GM12878 (cell line): ENCODE measurements at regions of chr1 and their contacts with region 1.

Region 1: DNA sequence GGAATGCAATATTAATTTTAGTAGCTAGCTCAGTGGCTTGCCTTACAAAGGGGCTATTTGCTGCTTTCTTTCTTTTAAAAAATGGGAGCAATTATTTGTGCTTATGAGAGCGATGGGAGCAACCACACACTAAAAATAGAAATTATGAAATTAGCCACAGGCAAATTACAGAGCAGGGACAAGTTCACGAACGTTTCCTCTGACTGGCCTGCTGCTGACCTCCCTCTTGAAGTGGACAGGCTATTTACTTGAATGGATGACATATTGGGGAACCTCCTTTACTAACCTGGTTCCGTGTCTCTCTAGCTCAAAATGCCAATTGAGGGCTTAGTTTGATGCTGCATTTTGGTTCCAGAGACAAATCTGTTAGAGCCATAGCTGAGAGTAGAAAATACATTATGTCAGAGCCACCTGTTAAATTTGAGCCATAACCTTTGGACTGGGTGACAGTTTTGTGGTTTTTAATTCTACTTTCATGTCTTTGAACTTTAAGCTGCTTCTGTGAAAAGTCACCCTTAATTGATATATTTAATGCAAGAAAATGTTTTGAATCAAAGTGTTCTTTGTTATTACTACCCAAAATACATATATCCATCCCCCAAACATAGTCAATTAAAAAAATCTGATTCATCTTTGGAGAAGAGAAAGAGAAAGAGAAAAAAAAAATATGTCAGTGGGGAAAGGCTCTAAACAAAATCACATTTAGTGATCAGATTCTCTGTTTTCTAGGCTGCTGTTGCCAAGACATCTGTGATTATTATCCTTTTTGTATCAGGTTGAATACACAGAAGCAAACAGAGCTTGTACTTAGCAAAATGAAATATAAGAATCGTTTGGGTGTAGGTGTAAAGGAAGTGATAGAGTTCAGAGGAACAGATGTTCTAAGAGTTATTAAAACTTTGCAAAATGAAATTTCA is 351.9 kb downstream of the ADGRL2 start:
- DNase-seq: peak; percentile 40
- ATAC-seq: peak; percentile 85
- H3K4me3 ChIP-seq: no peak overlapping the region
- H3K27ac ChIP-seq: peak overlapping the region; percentile 33; the same call in 1 of the 2 replicates
- H3K4me1 ChIP-seq: no peaks in the 10 kb centered on the region
- H3K27me3 ChIP-seq: no peaks in the 10 kb centered on the region
- CTCF ChIP-seq: no peak
- EP300 ChIP-seq: peak in 1 of 2 experiments; percentile 50; a peak in 2 of 4 replicates
- POLR2A ChIP-seq: no peak
- RAD21 ChIP-seq: no peak

Region 2: GRCh38 chr1:82110855-82111254 is 41.8 kb before region 1 on chr1:
- CTCF ChIA-PET with region 1: interaction called, 7 read pairs
- POLR2A ChIA-PET with region 1: interaction called, 3 read pairs
- RAD21 ChIA-PET with region 1: interaction called, 26 read pairs
- SMC1A ChIA-PET with region 1: interaction called, 43 read pairs
- in situ Hi-C with region 1: no loop called
- intact Hi-C with region 1: no loop called
- DNase-seq: no peak
- ATAC-seq: no peak
- H3K4me3 ChIP-seq: no peak overlapping the region
- H3K27ac ChIP-seq: no peak overlapping the region
- H3K4me1 ChIP-seq: no peaks in the 10 kb centered on the region
- H3K27me3 ChIP-seq: no peaks in the 10 kb centered on the region
- CTCF ChIP-seq: no peak
- EP300 ChIP-seq: no peak
- POLR2A ChIP-seq: no peak
- RAD21 ChIP-seq: no peak

Region 3: DNA sequence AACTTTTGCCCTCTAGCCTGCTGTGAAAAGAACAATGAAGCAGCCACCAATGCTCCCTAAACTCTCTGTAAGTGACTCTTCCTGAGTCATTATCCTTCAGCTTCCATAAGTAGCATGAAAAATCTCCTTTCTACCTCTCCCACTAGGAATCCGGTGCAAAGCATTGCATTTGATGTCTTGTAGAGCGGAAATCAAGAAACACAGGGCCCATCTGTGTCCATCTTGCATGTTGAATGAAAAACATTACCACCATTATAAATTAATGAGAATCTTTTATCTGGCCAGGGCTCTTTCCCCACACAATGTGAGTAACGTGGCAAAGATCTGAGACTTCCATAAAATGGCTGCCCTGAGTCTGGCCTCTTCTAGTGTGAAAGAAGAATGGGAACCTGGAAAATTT is 27.5 kb before region 1 on chr1:
- CTCF ChIA-PET with region 1: interaction called, 6 read pairs
- POLR2A ChIA-PET with region 1: interaction called, 4 read pairs
- RAD21 ChIA-PET with region 1: interaction called, 6 read pairs
- SMC1A ChIA-PET with region 1: interaction called, 18 read pairs
- in situ Hi-C with region 1: no loop called
- intact Hi-C with region 1: no loop called
- DNase-seq: no peak
- ATAC-seq: no peak
- H3K4me3 ChIP-seq: no peak overlapping the region
- H3K27ac ChIP-seq: no peak overlapping the region
- H3K4me1 ChIP-seq: no peaks in the 10 kb centered on the region
- H3K27me3 ChIP-seq: no peaks in the 10 kb centered on the region
- CTCF ChIP-seq: no peak
- EP300 ChIP-seq: no peak
- POLR2A ChIP-seq: no peak
- RAD21 ChIP-seq: no peak

Region 4: GRCh38 chr1:82225421-82226185 is 73.0 kb after region 1 on chr1:
- CTCF ChIA-PET with region 1: interaction called, 5 read pairs
- POLR2A ChIA-PET with region 1: interaction called, 19 read pairs
- RAD21 ChIA-PET with region 1: interaction called, 31 read pairs
- SMC1A ChIA-PET with region 1: interaction called, 63 read pairs
- in situ Hi-C with region 1: no loop called
- intact Hi-C with region 1: no loop called
- DNase-seq: peak; percentile 12
- ATAC-seq: peak; percentile 87
- H3K4me3 ChIP-seq: no peak overlapping the region
- H3K27ac ChIP-seq: no peak overlapping the region
- H3K4me1 ChIP-seq: no peaks in the 10 kb centered on the region
- H3K27me3 ChIP-seq: no peaks in the 10 kb centered on the region
- CTCF ChIP-seq: no peak
- EP300 ChIP-seq: no peak; a peak in 1 of 4 replicates
- POLR2A ChIP-seq: no peak
- RAD21 ChIP-seq: no peak

Region 5: DNA sequence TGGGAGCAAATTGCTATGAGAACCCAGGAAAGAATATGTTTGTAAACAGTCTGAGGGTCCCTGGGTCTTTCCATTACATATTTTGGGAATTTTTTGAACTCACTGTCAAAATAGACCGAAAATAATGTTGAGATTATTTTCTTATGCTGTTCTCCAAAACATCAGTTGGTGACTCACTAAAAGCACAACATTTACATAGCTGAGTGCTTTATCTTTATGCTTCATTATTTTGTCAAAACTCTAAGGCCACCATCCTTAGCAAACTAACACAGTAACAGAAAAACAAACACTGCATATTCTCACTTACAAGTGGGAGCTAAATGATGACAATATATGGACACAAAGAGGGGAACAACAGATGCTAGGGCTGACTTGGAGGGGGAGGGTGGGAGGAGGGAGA is 107.4 kb after region 1 on chr1:
- CTCF ChIA-PET with region 1: interaction called, 3 read pairs
- POLR2A ChIA-PET with region 1: no interaction called
- RAD21 ChIA-PET with region 1: interaction called, 5 read pairs
- SMC1A ChIA-PET with region 1: interaction called, 16 read pairs
- in situ Hi-C with region 1: no loop called
- intact Hi-C with region 1: no loop called
- DNase-seq: no peak
- ATAC-seq: no peak
- H3K4me3 ChIP-seq: no peak overlapping the region
- H3K27ac ChIP-seq: no peak overlapping the region
- H3K4me1 ChIP-seq: no peaks in the 10 kb centered on the region
- H3K27me3 ChIP-seq: no peaks in the 10 kb centered on the region
- CTCF ChIP-seq: no peak
- EP300 ChIP-seq: no peak
- POLR2A ChIP-seq: no peak
- RAD21 ChIP-seq: no peak